K562 (cell line): ENCODE measurements at regions of chr6 and their contacts with region 1.

Region 1: GRCh38 chr6:159969921-159970320 is 1.0 kb downstream of the IGF2R start:
- DNase-seq: peak in 3 of 4 experiments; percentile 57 to 91 (median 82)
- ATAC-seq: peak; percentile 75
- H3K4me3 ChIP-seq: peak overlapping the region; percentile 77
- H3K27ac ChIP-seq: peak overlapping the region; percentile 90
- H3K4me1 ChIP-seq: peaks cover 40 to 61% of the 10 kb centered on the region in 2 experiments
- H3K27me3 ChIP-seq: no peaks in the 10 kb centered on the region; a peak in 1 of 5 replicates
- CTCF ChIP-seq: no peak
- EP300 ChIP-seq: no peak
- POLR2A ChIP-seq: peak; percentile 54; the same call in 1 of the 2 replicates
- RAD21 ChIP-seq: 0 out of 4 replicates have a peak, but pooled peaks of 1 of the 2 experiments have one; percentile 4

Region 2: DNA sequence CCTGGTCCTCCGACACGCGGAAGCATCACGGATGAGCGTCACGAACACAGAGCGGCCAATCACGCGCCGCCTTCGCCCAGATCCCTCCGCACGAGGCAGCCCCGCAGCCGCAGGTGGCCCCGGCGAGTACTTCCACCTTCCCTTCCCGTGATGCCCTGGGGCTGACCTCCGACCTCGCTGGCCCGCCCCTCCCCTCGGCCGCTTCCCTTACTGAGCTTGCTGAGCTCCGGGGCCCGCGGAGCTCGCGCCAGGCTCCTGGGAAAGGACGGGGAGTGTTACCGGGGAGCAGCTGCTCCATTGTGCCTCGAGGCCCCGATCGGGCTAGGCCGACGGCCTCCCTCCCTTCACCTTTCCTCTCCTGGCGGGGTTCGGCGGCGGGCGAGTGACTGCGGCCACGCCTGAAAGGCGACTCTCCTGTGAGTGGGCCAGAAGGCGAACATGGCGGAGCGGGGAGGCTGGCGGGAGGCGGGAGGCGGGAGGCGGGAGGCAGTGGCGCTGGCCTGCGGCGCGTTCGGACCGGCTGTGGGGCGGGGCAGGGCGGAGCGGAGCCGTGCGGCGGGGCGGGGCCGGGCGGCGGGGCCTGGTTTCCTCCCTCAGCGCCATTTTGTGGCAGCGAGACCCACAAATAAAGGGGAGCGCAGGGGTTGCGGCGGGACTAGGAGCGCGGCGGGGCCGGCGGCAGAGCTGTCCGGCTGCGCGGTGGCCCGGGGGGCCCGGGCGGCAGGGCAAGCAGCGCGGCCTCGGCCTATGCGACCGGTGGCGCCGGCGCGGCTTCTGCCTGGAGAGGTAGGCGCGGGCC is 242.8 kb before region 1 on chr6 and contains the start of gene WTAP:
- CTCF ChIA-PET with region 1: no interaction called
- POLR2A ChIA-PET with region 1: no interaction called
- in situ Hi-C with region 1: no loop called
- intact Hi-C with region 1: loop called (anchors 10 kb)
- DNase-seq: peak; percentile 94 to 99 (median 95)
- ATAC-seq: peak; percentile 89
- H3K4me3 ChIP-seq: peak within 1 kb of the TSS; percentile 88
- H3K27ac ChIP-seq: peak within 1 kb of the TSS; percentile 98
- H3K4me1 ChIP-seq: peaks cover 6 to 10% of the 10 kb centered on the region in 2 experiments; a peak in 4 of 5 replicates
- H3K27me3 ChIP-seq: no peaks in the 10 kb centered on the region
- CTCF ChIP-seq: no peak
- EP300 ChIP-seq: no peak; the same call in none of the 2 replicates
- POLR2A ChIP-seq: peak; percentile 100
- RAD21 ChIP-seq: no peak
- polyA plus RNA-seq, gene WTAP: 73.9 to 115 TPM

Region 3: GRCh38 chr6:159989492-159990480 is 19.9 kb after region 1 on chr6:
- CTCF ChIA-PET with region 1: no interaction called
- POLR2A ChIA-PET with region 1: interaction called, 72 read pairs
- in situ Hi-C with region 1: no loop called
- intact Hi-C with region 1: loop called (anchors 2 kb)
- DNase-seq: peak in 1 of 4 experiments; percentile 75
- ATAC-seq: peak; percentile 72
- H3K4me3 ChIP-seq: peak overlapping the region; percentile 1; the same call in 1 of the 2 replicates
- H3K27ac ChIP-seq: peak overlapping the region; percentile 97
- H3K4me1 ChIP-seq: peaks cover 27 to 46% of the 10 kb centered on the region in 2 experiments
- H3K27me3 ChIP-seq: no peaks in the 10 kb centered on the region
- CTCF ChIP-seq: no peak
- EP300 ChIP-seq: peak; percentile 71
- POLR2A ChIP-seq: no peak
- RAD21 ChIP-seq: no peak

Region 4: DNA sequence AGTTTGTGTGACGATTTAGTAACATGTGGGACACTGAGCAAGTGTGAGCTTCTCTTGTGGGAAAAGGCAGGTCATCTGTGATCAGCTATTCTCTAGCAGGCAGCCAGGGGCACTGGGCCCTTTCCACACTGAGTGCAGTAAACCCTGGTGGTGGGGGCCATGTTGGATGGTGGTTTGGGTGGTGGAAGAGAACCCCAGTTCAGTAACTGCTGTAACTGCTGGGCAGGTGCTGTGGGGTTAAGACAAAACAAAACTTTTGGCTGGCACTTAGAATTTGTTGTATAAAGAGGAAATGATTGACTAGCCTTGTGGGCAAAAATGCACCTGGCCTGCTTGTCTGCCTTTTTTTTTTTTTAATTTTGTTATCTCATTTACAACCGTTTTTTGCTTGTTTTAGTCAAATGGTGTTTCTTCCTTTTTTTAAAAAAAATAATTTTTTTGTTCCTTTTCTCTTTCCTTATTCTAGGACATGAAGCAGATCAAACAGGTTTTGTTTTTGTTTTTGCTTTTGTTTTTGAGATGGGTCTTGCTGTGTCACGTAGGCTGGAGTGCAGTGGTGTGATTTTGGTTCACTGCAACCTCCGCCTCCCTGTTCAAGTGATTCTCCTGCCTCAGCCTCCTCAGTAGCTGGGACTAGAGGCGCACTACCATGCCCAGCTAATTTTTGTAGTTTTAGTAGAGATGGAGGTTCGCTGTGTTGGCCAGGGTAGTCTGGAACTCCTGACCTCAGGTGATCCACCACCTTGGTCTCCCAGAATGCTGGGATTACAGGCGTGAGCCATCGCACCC is 58.8 kb after region 1 on chr6:
- CTCF ChIA-PET with region 1: no interaction called
- POLR2A ChIA-PET with region 1: interaction called, 3 read pairs
- in situ Hi-C with region 1: no loop called
- intact Hi-C with region 1: loop called (anchors 5 kb)
- DNase-seq: no peak
- ATAC-seq: peak; percentile 68
- H3K4me3 ChIP-seq: no peak overlapping the region
- H3K27ac ChIP-seq: no peak overlapping the region
- H3K4me1 ChIP-seq: no peaks in the 10 kb centered on the region; a peak in 1 of 5 replicates
- H3K27me3 ChIP-seq: no peaks in the 10 kb centered on the region
- CTCF ChIP-seq: 0 out of 6 replicates have a peak, but pooled peaks of 1 of the 3 experiments have one; percentile 21
- EP300 ChIP-seq: no peak
- POLR2A ChIP-seq: no peak
- RAD21 ChIP-seq: no peak

Region 5: GRCh38 chr6:160041608-160042007 is 71.7 kb after region 1 on chr6:
- CTCF ChIA-PET with region 1: no interaction called
- POLR2A ChIA-PET with region 1: no interaction called
- in situ Hi-C with region 1: no loop called
- intact Hi-C with region 1: loop called (anchors 5 kb)
- DNase-seq: no peak
- ATAC-seq: peak; percentile 56
- H3K4me3 ChIP-seq: no peak overlapping the region
- H3K27ac ChIP-seq: 0 out of 3 replicates have a peak overlapping the region, but pooled peaks have one; percentile 13
- H3K4me1 ChIP-seq: peaks cover 5 to 9% of the 10 kb centered on the region in 2 experiments; a peak in 3 of 5 replicates
- H3K27me3 ChIP-seq: no peaks in the 10 kb centered on the region
- CTCF ChIP-seq: no peak
- EP300 ChIP-seq: no peak
- POLR2A ChIP-seq: no peak
- RAD21 ChIP-seq: no peak

Region 6: DNA sequence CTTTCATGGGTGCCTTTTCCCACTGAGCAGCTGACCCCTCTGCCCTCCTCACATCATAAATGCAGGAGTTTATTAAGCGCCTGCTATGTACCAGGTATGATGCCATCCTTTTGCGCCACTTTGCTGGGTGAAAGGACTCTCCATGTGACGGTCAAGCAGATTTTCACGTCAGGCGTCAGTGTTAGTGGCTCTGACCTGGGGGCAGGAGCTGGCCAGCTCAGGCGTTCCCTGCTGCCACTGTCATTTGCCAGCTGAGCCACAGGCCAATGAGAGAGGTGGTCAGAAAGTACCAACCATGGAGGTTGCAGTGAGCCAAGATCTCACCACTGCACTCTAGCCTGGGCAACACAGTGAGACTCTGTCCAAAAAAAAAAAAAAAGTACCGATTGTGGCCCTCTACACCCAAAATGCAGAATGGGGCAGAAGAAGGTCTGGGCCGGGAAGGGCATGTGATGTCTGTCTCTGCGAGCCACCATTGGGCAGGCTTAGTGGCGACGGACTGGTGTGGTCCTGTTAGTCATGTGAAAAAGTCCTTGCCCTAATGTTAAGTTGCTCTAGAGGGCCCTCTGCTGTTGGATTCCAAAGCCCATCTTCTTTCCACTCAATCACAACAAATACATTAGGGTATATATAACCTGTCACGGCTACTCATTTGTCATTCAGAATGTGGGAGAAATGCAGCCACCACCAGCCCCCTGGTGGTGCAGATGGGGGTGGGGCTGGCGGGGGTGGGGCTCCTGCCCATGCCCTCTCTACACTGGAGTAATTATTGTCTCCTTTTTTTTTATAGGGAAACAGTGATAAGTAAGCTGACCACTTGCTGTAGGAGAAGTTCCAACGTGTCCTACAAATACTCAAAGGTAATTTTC is 133.3 kb after region 1 on chr6:
- CTCF ChIA-PET with region 1: no interaction called
- POLR2A ChIA-PET with region 1: interaction called, 6 read pairs
- in situ Hi-C with region 1: no loop called
- intact Hi-C with region 1: loop called (anchors 2 kb)
- DNase-seq: peak; percentile 39 to 59 (median 47)
- ATAC-seq: peak; percentile 30
- H3K4me3 ChIP-seq: no peak overlapping the region
- H3K27ac ChIP-seq: no peak overlapping the region
- H3K4me1 ChIP-seq: peaks cover 32% of the 10 kb centered on the region in 2 experiments
- H3K27me3 ChIP-seq: no peaks in the 10 kb centered on the region; a peak in 1 of 5 replicates
- CTCF ChIP-seq: peak; percentile 54 to 75 (median 62)
- EP300 ChIP-seq: no peak
- POLR2A ChIP-seq: no peak
- RAD21 ChIP-seq: peak in 1 of 2 experiments; percentile 63; a peak in 3 of 4 replicates